ENCODE measurements at regions of chr3 and their contacts with region 1.

Region 1: DNA sequence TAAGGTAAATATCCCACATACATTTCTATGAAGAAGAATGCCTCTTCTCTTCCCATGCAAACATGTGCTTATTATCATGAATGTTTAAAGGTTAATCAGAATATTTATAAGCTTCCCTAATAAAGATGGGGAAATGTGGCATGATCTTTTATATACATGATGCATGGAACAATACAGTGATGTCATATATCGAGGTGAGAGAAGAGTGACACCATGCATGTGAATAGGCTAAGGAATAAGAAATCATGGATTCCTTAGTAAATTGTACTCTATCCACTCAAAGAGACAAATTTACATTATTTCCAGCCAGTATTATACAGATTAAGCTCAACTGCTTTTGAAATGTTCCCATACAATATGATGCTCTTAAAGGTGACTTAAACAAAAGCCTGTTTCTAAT is 1035.3 kb downstream of the ROBO1 start:
- DNase-seq: no peak
- ATAC-seq: no peak
- H3K4me3 ChIP-seq: no peak overlapping the region
- H3K27ac ChIP-seq: no peak overlapping the region
- H3K4me1 ChIP-seq: no peaks in the 10 kb centered on the region
- H3K27me3 ChIP-seq: no peaks in the 10 kb centered on the region

Region 2: DNA sequence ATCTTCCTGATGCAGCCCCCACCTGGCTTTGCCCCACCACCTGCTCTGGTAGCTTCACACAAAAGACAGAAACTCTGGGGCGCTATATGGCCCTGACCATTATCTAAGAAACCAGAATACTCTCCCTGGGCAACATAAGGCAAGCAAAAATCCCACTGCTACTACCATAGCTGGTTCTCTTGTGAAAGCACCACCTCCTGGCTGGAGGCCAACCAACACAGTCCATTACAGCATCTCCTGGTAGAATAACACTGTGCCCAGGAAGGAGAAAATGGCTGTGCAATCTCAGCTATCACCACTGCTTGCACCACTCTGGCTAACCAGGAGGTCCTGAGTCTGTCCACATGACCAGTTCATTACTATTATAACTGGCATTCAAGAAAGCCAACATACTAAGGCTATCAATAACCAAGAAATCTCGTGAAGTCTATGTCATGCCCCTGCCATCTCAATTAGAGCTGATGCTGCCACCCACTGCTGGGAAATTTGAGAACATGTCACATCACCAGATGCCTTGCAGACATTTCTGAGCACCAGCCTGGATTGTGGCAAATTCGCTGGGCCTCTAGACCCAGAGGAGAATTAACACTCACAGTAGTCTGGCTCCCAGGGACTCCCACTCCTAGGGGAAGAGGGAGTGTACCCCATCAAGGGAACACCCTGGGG is 577.8 kb before region 1 on chr3:
- intact Hi-C with region 1: no loop called
- DNase-seq: peak in 2 of 3 donors; percentile 29 to 47
- ATAC-seq: peak; percentile 29
- H3K4me3 ChIP-seq: no peak overlapping the region
- H3K27ac ChIP-seq: no peak overlapping the region
- H3K4me1 ChIP-seq: no peaks in the 10 kb centered on the region
- H3K27me3 ChIP-seq: no peaks in the 10 kb centered on the region

Region 3: DNA sequence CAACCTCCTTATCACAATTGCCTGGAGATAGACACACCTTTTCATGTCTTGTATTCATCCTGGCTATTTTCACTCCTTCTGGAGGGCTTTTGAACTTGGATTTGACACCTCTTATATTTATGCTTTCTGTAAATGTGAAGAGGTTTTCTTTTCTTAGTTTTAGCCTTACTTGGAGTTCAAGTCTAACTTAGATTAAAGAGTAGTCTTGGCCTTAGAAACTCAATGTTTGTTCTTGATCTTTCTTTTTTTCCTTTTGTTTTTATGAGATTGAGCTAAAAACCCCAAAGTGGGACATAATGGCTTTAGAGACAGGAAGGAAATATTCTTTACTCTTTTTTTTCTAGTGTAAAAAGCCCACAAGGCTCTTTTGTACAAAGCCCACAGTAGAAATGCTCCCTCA is 19.5 kb before region 1 on chr3:
- intact Hi-C with region 1: loop called in 1 of 4 experiments (anchors 2 kb)
- DNase-seq: no peak
- ATAC-seq: no peak
- H3K4me3 ChIP-seq: no peak overlapping the region
- H3K27ac ChIP-seq: no peak overlapping the region
- H3K4me1 ChIP-seq: no peaks in the 10 kb centered on the region
- H3K27me3 ChIP-seq: no peaks in the 10 kb centered on the region